PC-9 (cell line): ENCODE measurements at regions of chr2 and their contacts with region 1.

Region 1: DNA sequence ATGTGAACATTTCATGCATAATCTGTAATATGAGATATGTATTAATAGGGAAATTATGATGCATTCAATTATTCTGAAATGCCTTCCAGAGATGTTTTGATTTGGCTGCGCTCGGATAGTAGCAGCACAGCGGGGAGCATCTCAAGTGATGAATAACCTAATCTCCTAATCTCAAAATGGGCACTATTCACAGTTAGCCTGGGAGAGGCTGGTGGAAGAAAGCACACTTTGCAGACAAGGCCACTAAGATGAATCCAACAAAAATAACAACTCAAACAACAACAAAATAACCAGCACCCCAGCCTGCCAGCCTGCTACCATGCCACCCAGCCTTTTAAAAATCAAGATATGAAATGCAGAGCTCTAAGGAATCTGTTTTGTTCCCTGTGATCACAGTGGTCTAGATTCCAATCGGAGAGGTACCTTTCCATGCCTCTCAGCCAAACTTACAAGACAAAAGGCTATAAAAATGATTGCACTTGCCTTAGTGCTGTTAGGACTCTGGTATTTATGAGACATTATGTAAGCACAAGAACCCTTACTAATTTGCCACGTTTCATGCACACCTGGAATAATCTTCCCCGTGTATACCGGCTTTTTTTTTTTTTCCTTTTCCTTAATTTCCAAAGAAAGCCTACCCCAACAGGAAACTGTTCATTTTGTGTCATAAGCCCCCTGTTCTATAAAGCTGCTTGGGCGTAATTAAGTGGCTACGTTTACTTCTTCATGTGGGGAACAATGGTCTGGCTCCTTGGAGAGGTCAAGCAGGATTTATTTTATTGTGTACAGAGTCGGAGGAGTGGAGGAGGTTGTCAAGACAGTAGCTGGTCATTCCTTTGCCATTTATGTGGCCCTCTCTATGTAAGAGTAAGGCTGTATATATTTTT is 526.9 kb upstream of the FANCL start:
- DNase-seq: no peak
- H3K4me3 ChIP-seq: no peak overlapping the region
- H3K27ac ChIP-seq: no peak overlapping the region
- H3K4me1 ChIP-seq: no peaks in the 10 kb centered on the region
- H3K27me3 ChIP-seq: peaks cover 50% of the 10 kb centered on the region
- CTCF ChIP-seq: no peak

Region 2: DNA sequence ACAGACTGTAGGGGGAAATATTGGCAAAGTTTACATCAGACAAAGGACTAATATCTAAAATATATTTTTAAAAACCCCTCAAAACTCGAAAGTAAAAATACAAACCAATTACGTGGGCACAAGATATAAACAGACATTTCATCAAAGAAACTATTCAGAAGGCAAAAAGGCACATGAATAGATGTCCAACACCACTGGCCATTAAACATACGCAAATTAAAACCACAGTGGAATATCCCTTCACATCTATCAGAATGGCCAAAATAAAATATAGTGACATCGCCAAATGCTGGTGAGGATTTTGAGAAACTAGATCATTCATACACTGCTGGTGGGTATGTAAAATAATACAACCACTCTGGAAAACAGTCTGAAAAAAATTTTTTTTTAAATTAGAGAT is 1957.4 kb after region 1 on chr2:
- CTCF ChIA-PET with region 1: interaction called, 11 read pairs
- POLR2A ChIA-PET with region 1: no interaction called
- intact Hi-C with region 1: no loop called
- DNase-seq: no peak
- H3K4me3 ChIP-seq: no peak overlapping the region
- H3K27ac ChIP-seq: no peak overlapping the region
- H3K4me1 ChIP-seq: no peaks in the 10 kb centered on the region
- H3K27me3 ChIP-seq: no peaks in the 10 kb centered on the region; the same call in 1 of the 2 replicates
- CTCF ChIP-seq: no peak